Left ventricle myocardium superior (tissue), 1 donor: ENCODE measurements at regions of chr6 and their contacts with region 1.

Region 1: GRCh38 chr6:121771937-121772720 is 336.7 kb downstream of the GJA1 start:
- DNase-seq: no peak
- ATAC-seq: no peak

Region 2: GRCh38 chr6:121235386-121235785 is 536.7 kb before region 1 on chr6:
- intact Hi-C with region 1: no loop called
- DNase-seq: no peak
- ATAC-seq: no peak

Region 3: GRCh38 chr6:121334299-121335086 is 437.6 kb before region 1 on chr6 and contains the start of gene TBC1D32:
- intact Hi-C with region 1: no loop called
- DNase-seq: peak; percentile 96
- ATAC-seq: peak; percentile 100
- total RNA-seq, gene TBC1D32: 2.6 TPM

Region 4: GRCh38 chr6:121652726-121653623 is 119.2 kb before region 1 on chr6:
- intact Hi-C with region 1: loop called (anchors 10 kb)
- DNase-seq: no peak
- ATAC-seq: peak; percentile 63